ENCODE measurements at regions of chr11 and their contacts with region 1.

Region 1: GRCh38 chr11:65095974-65096806 is at the start of gene VPS51:
- DNase-seq: peak; percentile 87
- ATAC-seq: peak; percentile 97
- H3K4me3 Mint-ChIP-seq: peak within 1 kb of the TSS; percentile 91
- H3K27ac Mint-ChIP-seq: peak within 1 kb of the TSS; percentile 97
- H3K4me1 Mint-ChIP-seq: peaks cover 10% of the 10 kb centered on the region
- H3K27me3 Mint-ChIP-seq: no peaks in the 10 kb centered on the region
- total RNA-seq, gene VPS51: 130 to 138 TPM

Region 2: GRCh38 chr11:65066805-65067554 is 29.2 kb before region 1 on chr11:
- POLR2A ChIA-PET with region 1: no interaction called
- DNase-seq: no peak
- ATAC-seq: no peak
- H3K4me3 Mint-ChIP-seq: no peak overlapping the region
- H3K27ac Mint-ChIP-seq: no peak overlapping the region
- H3K4me1 Mint-ChIP-seq: peaks cover 4% of the 10 kb centered on the region
- H3K27me3 Mint-ChIP-seq: no peaks in the 10 kb centered on the region

Region 3: GRCh38 chr11:65111744-65112414 is 15.7 kb after region 1 on chr11 and contains the start of gene TM7SF2:
- POLR2A ChIA-PET with region 1: interaction called, 35 read pairs
- DNase-seq: peak; percentile 95
- ATAC-seq: peak; percentile 75
- H3K4me3 Mint-ChIP-seq: peak within 1 kb of the TSS; percentile 88
- H3K27ac Mint-ChIP-seq: peak within 1 kb of the TSS; percentile 91
- H3K4me1 Mint-ChIP-seq: peaks cover 30% of the 10 kb centered on the region
- H3K27me3 Mint-ChIP-seq: no peaks in the 10 kb centered on the region
- total RNA-seq, gene TM7SF2: 26.1 to 26.2 TPM